CD4-positive, alpha-beta memory T cell (primary cell): ENCODE measurements at regions of chr17 and their contacts with region 1.

Region 1: GRCh38 chr17:28384281-28385036 is 13.0 kb downstream of the SARM1 start:
- DNase-seq: peak; percentile 50 to 71 (median 58)
- H3K4me3 ChIP-seq: peak overlapping the region; percentile 86 to 91
- H3K4me3 Mint-ChIP-seq: peak overlapping the region; percentile 92 to 97 (median 95)
- H3K27ac ChIP-seq: peak overlapping the region; percentile 50
- H3K27ac Mint-ChIP-seq: peak overlapping the region; percentile 59 to 94 (median 90)
- H3K4me1 ChIP-seq: peaks cover 22% of the 10 kb centered on the region
- H3K4me1 Mint-ChIP-seq: peaks cover 15 to 32% (median 29%) of the 10 kb centered on the region in 4 donors
- H3K27me3 ChIP-seq: no peaks in the 10 kb centered on the region
- H3K27me3 Mint-ChIP-seq: peaks cover 0 to 2% of the 10 kb centered on the region in 2 donors

Region 2: GRCh38 chr17:28405632-28406472 is 21.4 kb after region 1 on chr17 and contains the start of gene SLC46A1:
- CTCF ChIA-PET with region 1: no interaction called
- POLR2A ChIA-PET with region 1: interaction called, 11 read pairs
- intact Hi-C with region 1: no loop called
- DNase-seq: peak in 3 of 5 donors; percentile 7 to 25 (median 19)
- H3K4me3 ChIP-seq: peak within 1 kb of the TSS; percentile 47 to 48
- H3K4me3 Mint-ChIP-seq: peak within 1 kb of the TSS; percentile 76 to 86 (median 80)
- H3K27ac ChIP-seq: no peak within 1 kb of the TSS
- H3K27ac Mint-ChIP-seq: peak within 1 kb of the TSS in 4 of 7 donors; percentile 29 to 74 (median 54)
- H3K4me1 ChIP-seq: peaks cover 14% of the 10 kb centered on the region
- H3K4me1 Mint-ChIP-seq: peaks cover 5 to 26% (median 13%) of the 10 kb centered on the region in 4 donors
- H3K27me3 ChIP-seq: peaks cover 5% of the 10 kb centered on the region
- H3K27me3 Mint-ChIP-seq: peaks cover 3 to 10% of the 10 kb centered on the region in 2 donors
- total RNA-seq, gene SLC46A1: 2.4 to 2.6 TPM